ENCODE measurements at regions of chr1 and their contacts with region 1.

Region 1: DNA sequence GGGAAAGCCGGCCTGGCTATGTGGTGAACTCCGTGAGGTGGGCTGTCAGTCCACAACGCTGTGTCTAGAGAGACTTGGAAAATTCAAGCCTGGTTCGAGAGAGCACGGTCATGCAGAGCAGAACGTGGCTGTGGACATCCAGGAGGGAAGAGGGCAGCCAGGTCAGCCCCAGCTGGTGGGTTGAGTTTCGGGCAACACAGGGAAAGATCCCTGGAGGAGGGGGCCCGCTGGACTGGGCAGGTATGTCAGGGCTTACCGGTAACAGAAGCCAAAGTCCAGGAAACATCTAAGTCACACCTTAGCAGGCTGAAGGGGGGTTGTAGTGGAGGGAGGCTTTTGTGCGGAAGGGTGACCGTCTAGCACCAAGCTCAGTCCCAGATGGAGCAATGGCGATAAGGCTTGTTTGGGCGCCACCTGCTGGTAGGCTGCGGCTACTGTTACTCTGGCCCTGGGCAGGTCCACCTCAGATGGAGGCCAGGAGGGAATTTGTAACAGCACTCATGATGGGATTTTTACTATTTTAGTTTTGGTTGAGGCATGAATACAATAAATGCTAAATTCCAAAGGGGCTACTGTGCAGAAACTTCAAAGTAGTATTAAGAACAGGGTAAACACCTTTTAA is 143.3 kb upstream of the ZNF644 start:
- DNase-seq: peak; percentile 62 to 97 (median 88)

Region 2: DNA sequence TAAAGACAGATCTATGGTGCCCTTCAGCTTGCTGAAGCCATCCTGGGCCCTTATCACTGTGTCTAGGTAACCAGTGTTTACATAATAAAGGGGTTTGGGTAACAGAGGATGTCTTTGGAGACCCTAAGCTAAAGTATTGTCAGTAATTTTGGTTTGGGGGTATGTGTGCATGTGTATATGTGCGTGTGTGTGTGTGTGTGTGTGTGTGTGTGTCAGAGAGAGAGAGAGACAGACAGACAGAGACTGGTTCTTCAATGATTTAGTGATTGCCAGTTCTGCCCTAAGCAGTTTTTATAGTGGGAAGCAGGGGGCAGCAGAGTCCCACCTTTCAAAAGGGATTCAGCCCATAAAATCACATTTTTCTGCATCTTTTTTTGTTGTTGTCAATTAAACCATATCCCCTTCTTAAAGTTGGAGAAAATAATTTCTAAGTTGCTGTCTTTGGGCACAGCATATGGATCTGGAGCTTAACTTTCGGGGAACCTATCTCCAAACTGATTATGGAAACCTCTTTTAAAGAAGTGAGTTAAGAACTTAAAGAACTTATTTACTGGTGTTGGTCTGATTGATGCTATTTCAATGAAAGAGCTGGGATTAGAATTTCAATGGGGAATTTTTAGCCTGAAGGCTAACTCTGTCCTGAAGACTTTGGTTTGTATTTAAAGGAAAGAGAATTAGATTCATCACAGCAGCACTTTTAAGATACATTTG is 1119.1 kb before region 1 on chr1:
- intact Hi-C with region 1: loop called (anchors 5 kb)
- DNase-seq: peak in 4 of 10 donors; percentile 12 to 28 (median 16)

Region 3: GRCh38 chr1:90579212-90579802 is 585.8 kb before region 1 on chr1:
- intact Hi-C with region 1: loop called (anchors 2 kb)
- DNase-seq: no peak

Region 4: GRCh38 chr1:91021686-91022517 is 143.2 kb before region 1 on chr1 and contains the start of gene ZNF644:
- intact Hi-C with region 1: loop called (anchors 5 kb)
- DNase-seq: peak; percentile 88 to 99 (median 92)

Region 5: GRCh38 chr1:91120421-91120820 is 44.7 kb before region 1 on chr1:
- intact Hi-C with region 1: no loop called
- DNase-seq: no peak

Region 6: DNA sequence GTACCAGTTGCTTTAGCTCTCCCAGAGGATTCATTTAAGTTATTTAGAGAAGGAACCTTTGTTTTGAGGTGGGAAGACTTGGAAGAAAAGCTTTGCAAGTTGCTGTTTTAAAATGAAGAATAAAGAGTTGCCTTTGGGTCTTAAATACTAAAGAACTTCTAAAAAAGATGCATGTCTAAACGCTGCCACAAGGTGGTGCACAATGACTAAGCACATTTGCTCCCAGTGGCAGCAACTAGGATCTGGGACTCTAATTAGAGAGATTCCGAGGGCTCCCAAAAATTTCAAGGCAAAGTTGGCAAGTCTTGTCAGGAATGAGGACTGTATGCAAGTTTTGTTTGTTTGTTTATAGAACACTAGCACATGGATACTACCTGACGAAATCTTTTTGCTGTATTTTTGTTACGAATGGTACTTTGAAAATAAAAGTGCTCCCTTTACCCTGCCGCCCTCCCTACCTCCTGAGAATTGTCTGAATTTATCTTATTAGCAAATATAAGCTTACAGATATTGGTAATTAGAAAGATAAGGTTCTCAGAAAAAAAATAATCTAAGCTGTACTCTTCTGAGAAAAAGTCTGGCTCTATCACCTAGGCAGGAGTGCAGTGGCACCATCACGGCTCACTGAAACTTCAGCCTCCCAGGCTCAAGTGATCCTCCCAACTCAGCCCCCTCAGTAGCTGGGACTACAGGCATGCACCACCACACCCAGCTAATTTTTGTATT is 117.7 kb after region 1 on chr1:
- intact Hi-C with region 1: loop called (anchors 5 kb)
- DNase-seq: peak in 8 of 10 donors; percentile 40 to 90 (median 55)

Region 7: DNA sequence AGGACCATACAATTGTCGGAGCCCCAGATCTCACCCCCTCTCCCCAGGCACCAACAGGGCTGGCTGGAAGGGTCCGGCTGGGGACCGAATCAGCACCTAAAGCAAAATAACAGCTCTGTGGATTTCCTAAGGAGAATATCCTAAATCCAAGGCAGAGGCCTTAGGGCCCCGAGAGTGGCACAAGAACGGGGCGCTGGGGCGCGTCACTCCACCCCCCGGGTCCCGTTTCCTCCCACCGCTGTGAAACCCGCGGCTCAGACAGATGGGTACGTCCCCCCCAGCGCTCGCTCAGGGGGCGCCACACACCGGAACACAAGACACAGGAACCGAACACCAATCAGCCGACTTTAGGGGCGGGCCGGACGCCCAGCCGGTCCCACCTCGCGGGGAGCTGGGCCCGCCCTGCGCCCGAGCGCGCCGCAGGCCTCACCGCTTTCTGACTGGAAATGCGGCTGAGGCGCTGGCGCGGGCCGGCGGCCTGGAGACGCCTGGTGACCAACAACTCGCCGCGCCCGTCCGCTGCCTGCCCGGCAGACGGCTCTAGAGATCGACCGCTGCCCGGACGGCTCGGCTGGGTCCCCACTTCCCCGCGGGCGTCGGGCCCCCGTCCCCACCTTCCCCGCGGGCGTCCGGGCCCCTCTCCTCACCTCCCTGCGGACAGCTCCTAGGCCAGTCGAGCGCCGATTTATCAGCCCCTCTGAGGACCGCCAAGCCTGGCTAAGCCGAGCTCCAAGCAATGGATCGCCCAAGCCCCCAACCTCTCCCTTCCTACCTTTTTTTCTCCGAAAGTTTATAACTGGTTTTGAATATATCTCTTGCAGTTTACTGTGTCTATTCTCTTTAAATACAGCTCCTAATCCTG is 239.2 kb after region 1 on chr1 and contains the start of gene HFM1:
- intact Hi-C with region 1: loop called (anchors 5 kb)
- DNase-seq: peak; percentile 35 to 96 (median 78)

Region 8: GRCh38 chr1:91929250-91929649 is 764.1 kb after region 1 on chr1:
- intact Hi-C with region 1: loop called (anchors 5 kb)
- DNase-seq: no peak

Measured in posterior cingulate gyrus (tissue), 11 donors.